Sigmoid colon (tissue), 7 donors: ENCODE measurements at regions of chr12 and their contacts with region 1.

Region 1: GRCh38 chr12:26113853-26114719 is 10.8 kb downstream of the BHLHE41 start:
- DNase-seq: peak; percentile 97
- H3K4me3 ChIP-seq: peak overlapping the region; percentile 34 to 57 (median 55)
- H3K27ac ChIP-seq: peak overlapping the region; percentile 91 to 95 (median 92)
- H3K4me1 ChIP-seq: peaks cover 0 to 21% (median 18%) of the 10 kb centered on the region in 4 donors
- H3K27me3 ChIP-seq: no peaks in the 10 kb centered on the region
- CTCF ChIP-seq: peak in 3 of 4 experiments; percentile 22 to 43 (median 37)
- EP300 ChIP-seq: peak in 3 of 4 donors; percentile 30 to 53 (median 39)
- POLR2A ChIP-seq: peak; percentile 61 to 63

Region 2: DNA sequence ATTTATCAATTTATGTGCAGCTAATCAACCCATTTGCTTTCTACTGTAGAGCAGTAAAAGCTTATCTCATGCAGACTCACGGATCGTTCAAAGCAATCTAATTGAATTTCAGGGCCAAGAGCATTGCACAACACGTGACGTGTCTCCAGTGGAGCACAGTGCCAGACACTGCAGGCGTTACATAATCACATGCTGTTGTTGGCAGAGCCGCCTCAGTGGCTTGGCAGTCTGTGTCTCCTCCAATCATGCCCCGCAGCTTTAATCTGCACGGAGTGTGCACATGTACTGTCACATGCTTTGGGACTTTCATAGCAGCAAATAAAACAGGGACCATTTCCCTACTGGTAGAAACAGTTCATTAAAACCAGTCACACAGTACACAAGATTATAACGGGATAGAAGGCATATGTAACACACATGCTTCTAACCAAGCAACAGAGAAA is 409.6 kb after region 1 on chr12:
- intact Hi-C with region 1: loop called (anchors 5 kb)
- DNase-seq: peak; percentile 97
- H3K4me3 ChIP-seq: no peak overlapping the region
- H3K27ac ChIP-seq: peak overlapping the region; percentile 21 to 76 (median 64)
- H3K4me1 ChIP-seq: peaks cover 0 to 13% (median 6%) of the 10 kb centered on the region in 4 donors
- H3K27me3 ChIP-seq: no peaks in the 10 kb centered on the region
- CTCF ChIP-seq: peak in 1 of 4 experiments; percentile 28
- EP300 ChIP-seq: peak in 3 of 4 donors; percentile 4 to 78 (median 76)
- POLR2A ChIP-seq: no peak